ENCODE measurements at regions of chr10 and their contacts with region 1.

Region 1: GRCh38 chr10:63720072-63720537 is 198.9 kb downstream of the REEP3 start:
- DNase-seq: peak; percentile 45
- ATAC-seq: peak; percentile 68
- H3K4me3 Mint-ChIP-seq: no peak overlapping the region
- H3K27ac Mint-ChIP-seq: no peak overlapping the region
- H3K4me1 Mint-ChIP-seq: peaks cover 49% of the 10 kb centered on the region
- H3K27me3 Mint-ChIP-seq: no peaks in the 10 kb centered on the region; the same call in 1 of the 2 replicates
- CTCF ChIP-seq: peak; percentile 95

Region 2: GRCh38 chr10:63157845-63158624 is 562.1 kb before region 1 on chr10:
- CTCF ChIA-PET with region 1: interaction called, 15 read pairs
- POLR2A ChIA-PET with region 1: no interaction called
- DNase-seq: peak; percentile 25
- ATAC-seq: peak; percentile 65
- H3K4me3 Mint-ChIP-seq: no peak overlapping the region
- H3K27ac Mint-ChIP-seq: no peak overlapping the region; the same call in 1 of the 2 replicates
- H3K4me1 Mint-ChIP-seq: 0 out of 2 replicates have a peak, but pooled peaks cover 4% of the 10 kb centered on the region
- H3K27me3 Mint-ChIP-seq: no peaks in the 10 kb centered on the region
- CTCF ChIP-seq: peak; percentile 51; the same call in 1 of the 2 replicates

Region 3: GRCh38 chr10:63236113-63236935 is 483.8 kb before region 1 on chr10:
- CTCF ChIA-PET with region 1: interaction called, 11 read pairs
- POLR2A ChIA-PET with region 1: no interaction called
- DNase-seq: no peak
- ATAC-seq: no peak
- H3K4me3 Mint-ChIP-seq: no peak overlapping the region
- H3K27ac Mint-ChIP-seq: no peak overlapping the region
- H3K4me1 Mint-ChIP-seq: peaks cover 45% of the 10 kb centered on the region
- H3K27me3 Mint-ChIP-seq: no peaks in the 10 kb centered on the region
- CTCF ChIP-seq: no peak

Region 4: GRCh38 chr10:63629363-63630084 is 90.6 kb before region 1 on chr10:
- CTCF ChIA-PET with region 1: interaction called, 79 read pairs
- POLR2A ChIA-PET with region 1: interaction called, 10 read pairs
- DNase-seq: peak; percentile 95
- ATAC-seq: peak; percentile 77
- H3K4me3 Mint-ChIP-seq: peak overlapping the region; percentile 68
- H3K27ac Mint-ChIP-seq: peak overlapping the region; percentile 98
- H3K4me1 Mint-ChIP-seq: peaks cover 66% of the 10 kb centered on the region
- H3K27me3 Mint-ChIP-seq: no peaks in the 10 kb centered on the region
- CTCF ChIP-seq: peak; percentile 66

Region 5: DNA sequence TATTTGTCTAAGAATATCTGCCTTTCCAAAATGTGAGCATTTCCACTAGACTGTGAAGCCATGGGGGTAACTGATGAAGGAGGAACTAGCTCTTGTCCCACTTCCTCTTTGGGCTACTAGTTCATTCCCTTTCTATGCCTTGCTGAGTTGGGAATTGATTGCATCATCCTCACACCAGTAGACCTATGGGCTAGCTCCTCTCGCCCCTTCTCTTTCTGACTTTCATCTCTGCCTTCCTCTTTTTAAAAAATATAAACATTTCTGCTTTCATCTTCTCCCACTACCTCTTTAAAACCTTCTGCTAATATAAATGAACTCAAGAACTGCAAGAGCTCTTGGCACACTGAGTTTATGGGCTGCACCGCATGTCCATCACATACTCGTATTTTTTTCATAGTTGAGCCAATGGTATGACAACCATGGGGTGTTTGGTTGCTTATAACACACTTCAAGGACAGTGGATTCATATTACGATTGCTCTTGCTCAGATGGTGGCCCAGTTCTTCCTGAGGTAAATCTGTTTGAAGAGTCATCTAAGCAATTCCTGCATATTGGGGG is 16.9 kb before region 1 on chr10:
- CTCF ChIA-PET with region 1: interaction called, 11 read pairs
- POLR2A ChIA-PET with region 1: no interaction called
- DNase-seq: no peak
- ATAC-seq: peak; percentile 55
- H3K4me3 Mint-ChIP-seq: no peak overlapping the region
- H3K27ac Mint-ChIP-seq: peak overlapping the region; percentile 51; the same call in 1 of the 2 replicates
- H3K4me1 Mint-ChIP-seq: peaks cover 33% of the 10 kb centered on the region
- H3K27me3 Mint-ChIP-seq: no peaks in the 10 kb centered on the region
- CTCF ChIP-seq: no peak

Region 6: DNA sequence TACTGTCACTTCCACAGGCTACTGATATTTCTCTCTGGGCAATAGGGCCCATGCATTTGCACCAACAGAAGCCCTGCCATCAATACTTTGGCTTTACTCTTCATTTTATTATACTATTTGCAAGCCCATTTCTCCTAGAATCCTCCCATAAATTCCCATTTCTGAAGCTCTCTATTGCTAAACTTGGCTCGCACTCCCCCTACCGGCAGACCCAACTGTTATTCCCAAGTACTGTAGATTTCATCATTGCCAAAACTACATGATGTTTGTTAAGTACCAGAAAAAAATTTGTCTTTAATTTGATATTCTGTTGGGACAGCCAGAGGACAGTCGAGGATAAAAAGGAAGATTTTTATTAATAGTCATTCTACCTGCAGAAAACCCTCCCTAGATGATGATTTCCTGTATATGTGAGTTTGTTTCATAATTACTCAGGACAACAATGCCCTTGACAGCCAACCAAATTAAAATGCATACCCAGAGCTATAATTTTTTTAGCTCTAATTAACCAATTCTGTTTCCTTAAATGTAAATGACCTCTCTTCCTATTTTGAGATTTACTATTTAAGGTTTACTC is 99.7 kb after region 1 on chr10:
- CTCF ChIA-PET with region 1: interaction called, 16 read pairs
- POLR2A ChIA-PET with region 1: no interaction called
- DNase-seq: peak; percentile 74
- ATAC-seq: peak; percentile 46
- H3K4me3 Mint-ChIP-seq: no peak overlapping the region
- H3K27ac Mint-ChIP-seq: no peak overlapping the region
- H3K4me1 Mint-ChIP-seq: no peaks in the 10 kb centered on the region
- H3K27me3 Mint-ChIP-seq: no peaks in the 10 kb centered on the region
- CTCF ChIP-seq: peak; percentile 69

Region 7: DNA sequence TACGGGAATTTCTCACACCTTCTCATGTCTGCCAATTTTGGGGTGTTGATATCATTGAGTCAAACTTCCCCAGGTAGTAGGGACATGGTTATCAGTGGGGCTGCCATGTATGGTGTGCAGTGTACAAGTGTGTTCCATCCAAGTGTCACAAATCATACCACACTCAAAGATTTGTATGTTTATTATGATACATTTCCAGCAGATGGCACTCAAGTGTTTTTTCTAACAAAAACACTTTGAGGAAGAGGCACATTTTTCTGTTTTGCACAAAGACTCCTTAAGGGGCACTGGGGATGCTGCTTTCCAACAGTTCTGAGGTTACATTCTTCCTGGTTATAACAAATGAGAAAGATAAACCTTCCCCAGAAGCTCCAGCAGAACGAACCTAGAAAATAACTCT is 215.6 kb after region 1 on chr10:
- CTCF ChIA-PET with region 1: no interaction called
- POLR2A ChIA-PET with region 1: no interaction called
- DNase-seq: no peak
- ATAC-seq: no peak
- H3K4me3 Mint-ChIP-seq: no peak overlapping the region
- H3K27ac Mint-ChIP-seq: no peak overlapping the region
- H3K4me1 Mint-ChIP-seq: peaks cover 21% of the 10 kb centered on the region
- H3K27me3 Mint-ChIP-seq: no peaks in the 10 kb centered on the region
- CTCF ChIP-seq: no peak

Measured in WTC11 (cell line).